BJ (cell line): ENCODE measurements at regions of chr1 and their contacts with region 1.

Region 1: DNA sequence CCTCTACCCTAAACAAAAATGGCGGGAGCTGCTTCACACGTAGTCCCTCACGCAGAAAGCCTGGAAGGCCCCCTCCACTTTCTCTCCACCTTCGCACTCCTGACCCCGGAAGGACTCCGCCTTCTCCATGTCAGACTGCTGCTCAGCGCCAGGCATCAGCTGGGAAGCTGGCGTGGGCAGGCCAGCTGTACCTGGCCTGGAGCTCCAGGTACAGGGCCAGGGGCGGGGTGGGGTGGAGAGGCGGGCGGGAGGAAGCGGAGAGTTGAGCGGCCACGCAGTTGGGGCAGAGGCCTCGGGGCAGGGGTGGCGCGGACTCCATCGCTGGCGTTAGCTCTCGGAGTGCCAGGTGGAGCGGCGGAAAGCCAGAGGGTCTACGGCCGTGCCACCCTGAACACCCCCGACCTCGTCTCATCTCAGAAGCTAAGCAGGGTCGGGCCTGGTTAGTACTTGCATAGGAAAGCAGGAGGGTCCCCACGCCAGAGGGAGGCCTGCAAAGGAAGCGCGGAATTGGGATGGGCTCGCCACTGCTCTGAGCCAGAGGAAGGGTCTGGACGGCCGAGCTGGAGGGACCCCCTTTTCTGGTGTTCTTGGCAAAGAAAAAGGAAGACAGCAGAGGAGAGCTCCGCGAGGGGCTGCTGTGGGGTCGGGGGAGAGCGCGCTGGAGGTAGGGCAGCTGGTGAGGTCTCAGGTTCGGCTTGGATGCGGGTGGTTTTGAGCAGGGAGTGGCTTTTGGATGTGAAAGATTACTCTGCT is at the start of gene MIGA1:
- DNase-seq: no peak
- H3K4me3 ChIP-seq: peak within 1 kb of the TSS; percentile 94
- H3K27me3 ChIP-seq: no peaks in the 10 kb centered on the region
- CTCF ChIP-seq: no peak
- polyA plus RNA-seq, gene MIGA1: 3.3 and 7.1 TPM in 2 replicates

Region 2: DNA sequence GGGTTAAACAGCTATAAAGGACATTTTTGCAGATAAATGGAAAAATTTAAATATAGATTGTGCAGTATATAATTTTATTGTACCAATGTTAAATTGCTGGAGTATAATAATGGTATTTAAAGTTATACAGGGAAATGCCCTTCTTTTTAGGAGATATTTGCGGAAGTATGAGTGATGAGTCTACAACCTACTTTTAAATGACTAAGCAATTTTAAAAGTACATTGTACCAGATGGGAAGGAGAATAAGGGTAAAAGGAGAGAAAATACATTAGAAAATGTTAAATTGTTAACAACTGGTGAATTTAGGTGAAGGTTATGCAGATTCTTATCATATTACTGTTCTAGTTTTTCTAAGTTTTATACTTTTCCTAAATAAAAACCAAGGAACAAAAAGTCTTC is 189.1 kb before region 1 on chr1:
- CTCF ChIA-PET with region 1: no interaction called
- POLR2A ChIA-PET with region 1: interaction called, 19 read pairs
- DNase-seq: no peak
- H3K4me3 ChIP-seq: no peak overlapping the region
- H3K27me3 ChIP-seq: no peaks in the 10 kb centered on the region
- CTCF ChIP-seq: no peak

Region 3: GRCh38 chr1:78004719-78005447 is 225.2 kb after region 1 on chr1 and contains the start of gene DNAJB4:
- CTCF ChIA-PET with region 1: no interaction called
- POLR2A ChIA-PET with region 1: interaction called, 14 read pairs
- DNase-seq: peak; percentile 90
- H3K4me3 ChIP-seq: peak within 1 kb of the TSS; percentile 68
- H3K27me3 ChIP-seq: no peaks in the 10 kb centered on the region
- CTCF ChIP-seq: no peak
- polyA plus RNA-seq, gene DNAJB4: 16.7 and 39.6 TPM in 2 replicates